ENCODE measurements at regions of chr4 and their contacts with region 1.

Region 1: GRCh38 chr4:8403173-8403753 is 37.3 kb downstream of the ACOX3 start:
- DNase-seq: peak; percentile 61 to 68 (median 61)
- H3K4me3 ChIP-seq: peak overlapping the region in 1 of 7 experiments; percentile 13
- H3K27ac ChIP-seq: no peak overlapping the region
- H3K4me1 ChIP-seq: peaks cover 4 to 45% (median 33%) of the 10 kb centered on the region in 4 experiments
- H3K27me3 ChIP-seq: no peaks in the 10 kb centered on the region

Region 2: DNA sequence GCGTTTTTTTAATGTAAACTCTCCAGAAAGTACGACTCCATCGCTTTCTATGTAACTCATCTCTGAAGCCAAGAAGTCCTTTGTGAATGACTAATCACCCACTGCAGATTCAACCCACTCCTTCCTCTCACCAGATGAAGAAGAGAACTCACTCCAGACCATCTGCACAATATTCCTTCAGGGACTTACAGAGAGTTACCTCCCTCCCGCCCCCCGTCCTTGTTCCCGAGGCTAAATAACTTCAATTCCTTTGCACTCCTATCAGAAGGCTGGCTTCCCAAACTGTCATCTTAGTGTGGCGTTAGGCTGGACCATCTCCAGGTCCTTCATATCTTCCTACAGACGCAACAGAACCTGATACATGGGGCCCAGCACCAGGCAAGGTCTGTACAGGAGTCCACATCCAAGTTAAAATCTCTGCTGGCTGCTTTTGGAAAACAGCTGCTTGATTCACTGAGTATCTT is 546.0 kb before region 1 on chr4:
- CTCF ChIA-PET with region 1: no interaction called
- POLR2A ChIA-PET with region 1: no interaction called
- DNase-seq: no peak
- H3K4me3 ChIP-seq: no peak overlapping the region
- H3K27ac ChIP-seq: no peak overlapping the region
- H3K4me1 ChIP-seq: no peaks in the 10 kb centered on the region
- H3K27me3 ChIP-seq: peaks cover 0 to 56% (median 16%) of the 10 kb centered on the region in 5 experiments

Region 3: DNA sequence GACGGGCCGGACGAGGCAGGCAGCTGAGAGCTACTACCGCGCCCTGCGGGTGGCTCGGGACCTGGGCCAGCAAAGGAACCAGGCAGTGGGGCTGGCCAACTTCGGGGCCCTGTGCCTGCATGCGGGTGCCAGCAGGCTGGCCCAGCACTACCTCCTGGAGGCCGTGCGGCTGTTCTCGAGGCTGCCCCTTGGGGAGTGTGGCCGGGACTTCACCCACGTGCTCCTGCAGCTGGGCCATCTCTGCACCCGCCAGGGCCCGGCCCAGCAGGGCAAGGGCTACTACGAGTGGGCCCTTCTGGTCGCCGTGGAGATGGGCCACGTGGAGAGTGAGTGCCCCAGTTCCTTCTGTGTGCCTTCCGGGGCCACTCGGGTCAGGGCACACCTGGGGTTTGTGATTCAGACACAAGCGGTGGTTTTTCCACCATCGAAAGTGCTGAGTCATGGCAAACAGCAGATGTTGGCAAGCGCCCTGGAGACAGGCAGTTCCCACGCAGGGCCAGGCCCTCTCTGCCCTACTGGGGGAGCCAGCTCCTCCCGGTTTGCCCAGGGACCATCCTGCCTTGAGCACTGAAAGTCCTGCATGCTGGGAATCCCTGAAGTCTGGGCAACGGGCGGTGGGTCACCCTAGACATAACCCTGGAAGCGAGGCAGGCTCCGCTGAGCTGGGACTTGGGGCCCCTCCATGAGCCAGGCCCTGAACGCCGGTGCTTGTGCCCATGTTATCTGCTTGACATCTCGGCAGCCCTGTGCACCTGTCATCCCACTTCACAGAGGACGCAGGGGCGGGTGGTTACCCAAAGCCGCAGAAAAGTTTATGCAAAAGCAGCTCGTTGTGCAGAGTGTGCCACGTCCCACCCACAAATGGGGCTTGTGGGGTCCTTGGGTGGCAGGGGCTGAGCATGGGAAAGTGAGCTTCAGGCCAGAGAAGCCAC is 174.7 kb before region 1 on chr4:
- CTCF ChIA-PET with region 1: interaction called, 17 read pairs
- POLR2A ChIA-PET with region 1: no interaction called
- DNase-seq: peak; percentile 78 to 97 (median 96)
- H3K4me3 ChIP-seq: peak overlapping the region in 1 of 7 experiments; percentile 28
- H3K27ac ChIP-seq: no peak overlapping the region
- H3K4me1 ChIP-seq: peaks cover 8 to 62% (median 57%) of the 10 kb centered on the region in 4 experiments
- H3K27me3 ChIP-seq: no peaks in the 10 kb centered on the region

Region 4: DNA sequence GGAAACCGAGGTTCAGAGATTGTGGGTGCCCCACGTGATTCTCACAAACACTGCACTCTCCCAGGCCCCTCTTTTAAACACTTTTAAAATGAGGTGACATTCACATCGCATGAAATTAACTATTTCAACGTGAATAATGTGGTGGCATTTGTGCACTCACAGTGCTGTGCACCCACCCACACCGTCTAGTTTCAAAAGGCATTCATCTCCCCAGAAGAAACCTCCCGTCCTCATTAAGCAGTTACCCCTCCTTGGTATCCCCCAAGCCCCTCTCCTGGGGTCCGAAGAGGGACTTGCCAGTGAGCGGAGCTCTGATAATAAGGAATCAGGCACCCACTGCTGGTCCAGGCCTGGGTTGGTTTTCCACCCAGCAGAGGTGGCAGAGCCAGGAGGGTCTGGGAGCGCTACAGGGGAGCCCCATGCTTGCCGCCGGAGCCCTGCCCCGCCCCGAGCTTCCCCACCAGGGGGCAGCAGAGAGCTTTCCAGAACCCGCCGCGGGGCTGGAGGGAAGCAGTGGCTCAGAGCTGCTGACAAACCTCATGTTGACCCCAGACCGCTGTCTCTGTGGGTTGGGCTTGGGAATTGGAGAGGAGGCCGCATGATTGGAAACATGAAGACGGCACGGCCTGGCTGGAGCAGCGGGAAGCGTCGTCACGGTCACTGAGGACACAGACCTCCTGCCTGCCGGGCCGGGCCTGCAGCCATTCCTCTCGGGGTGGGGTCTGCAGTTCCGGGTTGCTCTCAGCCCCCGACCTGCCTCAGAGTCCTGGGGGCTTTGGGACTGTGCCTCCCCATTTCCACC is 161.2 kb before region 1 on chr4:
- CTCF ChIA-PET with region 1: interaction called, 62 read pairs
- POLR2A ChIA-PET with region 1: interaction called, 3 read pairs
- DNase-seq: peak; percentile 64 to 83 (median 78)
- H3K4me3 ChIP-seq: no peak overlapping the region
- H3K27ac ChIP-seq: no peak overlapping the region
- H3K4me1 ChIP-seq: peaks cover 0 to 33% (median 20%) of the 10 kb centered on the region in 4 experiments
- H3K27me3 ChIP-seq: no peaks in the 10 kb centered on the region

Region 5: GRCh38 chr4:8267077-8267476 is 136.2 kb before region 1 on chr4:
- CTCF ChIA-PET with region 1: interaction called, 52 read pairs
- POLR2A ChIA-PET with region 1: no interaction called
- DNase-seq: peak; percentile 56 to 78 (median 77)
- H3K4me3 ChIP-seq: no peak overlapping the region
- H3K27ac ChIP-seq: no peak overlapping the region
- H3K4me1 ChIP-seq: peaks cover 0 to 56% (median 43%) of the 10 kb centered on the region in 4 experiments
- H3K27me3 ChIP-seq: peaks cover 0 to 11% (median 3%) of the 10 kb centered on the region in 5 experiments

Region 6: DNA sequence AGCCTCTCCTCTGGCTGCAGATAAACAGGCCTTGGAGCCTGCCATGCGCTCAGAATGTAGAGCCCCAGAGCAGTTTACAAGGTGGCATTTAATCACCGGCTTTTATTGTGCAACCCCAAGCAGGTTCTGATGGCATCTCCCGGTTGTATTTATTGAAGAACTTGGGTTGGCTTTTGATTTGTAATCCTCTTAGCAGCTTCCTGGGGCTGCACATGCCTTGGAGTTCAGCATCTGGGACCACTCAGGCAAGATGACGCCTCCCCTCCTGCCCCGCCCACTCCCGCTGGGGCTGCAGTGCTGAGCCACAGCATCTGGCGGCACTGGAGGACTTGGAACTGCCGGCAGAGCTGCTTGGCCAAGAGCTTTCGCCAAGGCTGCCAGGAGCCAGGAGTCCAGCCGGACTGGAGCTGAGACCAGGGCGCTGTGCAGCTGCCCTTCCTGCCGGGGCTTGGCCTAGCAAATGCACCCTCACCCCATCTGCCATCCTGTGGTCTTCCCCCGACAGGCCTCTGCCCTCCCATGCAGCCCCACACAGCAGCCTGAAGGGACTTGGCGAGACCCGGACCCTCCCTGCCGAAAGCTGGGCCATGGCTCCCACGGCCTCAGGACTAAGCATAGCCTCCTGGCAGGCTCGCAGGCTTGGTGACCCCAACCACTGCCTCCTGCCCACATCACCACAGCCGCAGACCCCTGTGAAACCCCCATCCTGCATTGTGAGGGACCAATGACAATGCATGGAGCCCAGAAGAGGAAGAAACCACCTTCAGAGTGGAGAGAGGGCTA is 128.3 kb before region 1 on chr4:
- CTCF ChIA-PET with region 1: interaction called, 24 read pairs
- POLR2A ChIA-PET with region 1: no interaction called
- DNase-seq: peak; percentile 60 to 80 (median 76)
- H3K4me3 ChIP-seq: peak overlapping the region in 1 of 7 experiments; percentile 9
- H3K27ac ChIP-seq: no peak overlapping the region
- H3K4me1 ChIP-seq: peaks cover 0 to 99% (median 92%) of the 10 kb centered on the region in 4 experiments
- H3K27me3 ChIP-seq: peaks cover 0 to 11% (median 3%) of the 10 kb centered on the region in 5 experiments

Region 7: GRCh38 chr4:8428293-8429097 is 25.2 kb after region 1 on chr4:
- CTCF ChIA-PET with region 1: interaction called, 15 read pairs
- POLR2A ChIA-PET with region 1: no interaction called
- DNase-seq: peak; percentile 81 to 88 (median 88)
- H3K4me3 ChIP-seq: peak overlapping the region; percentile 53 to 93 (median 81)
- H3K27ac ChIP-seq: peak overlapping the region in 1 of 2 experiments; percentile 73
- H3K4me1 ChIP-seq: peaks cover 4 to 15% (median 15%) of the 10 kb centered on the region in 4 experiments
- H3K27me3 ChIP-seq: no peaks in the 10 kb centered on the region

Region 8: DNA sequence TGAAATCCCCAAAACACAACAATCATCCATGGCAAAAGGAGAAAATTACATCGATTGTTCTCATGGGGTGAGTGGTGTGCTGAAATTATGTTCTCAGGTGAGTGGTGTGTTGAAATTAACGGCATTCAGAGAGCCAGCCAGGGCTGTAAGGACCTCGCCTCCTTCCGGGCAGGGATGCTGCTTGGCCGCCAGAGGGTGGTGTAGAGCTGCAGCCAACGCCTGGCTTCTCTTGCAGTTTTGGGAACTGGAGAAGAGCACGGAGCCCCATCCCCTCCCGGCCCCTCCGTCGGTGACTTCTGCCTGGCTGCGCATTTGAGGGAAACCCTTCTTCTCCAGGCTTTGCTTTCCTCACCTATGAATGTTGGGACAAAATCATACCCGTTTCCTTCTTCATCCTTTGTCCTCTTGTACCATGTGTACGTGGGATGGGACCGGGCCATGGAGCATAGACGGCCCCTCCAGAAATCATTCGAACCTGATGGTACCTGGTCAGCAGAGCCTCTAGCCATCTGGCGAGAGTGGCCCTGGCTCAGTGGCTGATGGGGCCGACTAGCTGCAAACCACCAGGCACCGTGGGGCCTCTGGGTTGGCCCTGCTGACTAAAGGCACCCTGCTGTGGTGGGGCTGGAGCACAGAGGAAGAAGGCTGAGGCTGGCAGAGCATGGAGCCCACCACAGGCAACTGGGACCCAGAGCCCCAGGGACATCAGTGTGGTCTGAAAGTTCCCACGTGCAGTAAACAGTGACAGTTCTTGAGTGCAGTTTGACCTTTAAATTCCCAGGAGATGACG is 65.7 kb after region 1 on chr4:
- CTCF ChIA-PET with region 1: no interaction called
- POLR2A ChIA-PET with region 1: no interaction called
- DNase-seq: peak; percentile 44 to 69 (median 61)
- H3K4me3 ChIP-seq: no peak overlapping the region
- H3K27ac ChIP-seq: no peak overlapping the region
- H3K4me1 ChIP-seq: no peaks in the 10 kb centered on the region
- H3K27me3 ChIP-seq: no peaks in the 10 kb centered on the region